ENCODE measurements at regions of chr18 and their contacts with region 1.

Region 1: DNA sequence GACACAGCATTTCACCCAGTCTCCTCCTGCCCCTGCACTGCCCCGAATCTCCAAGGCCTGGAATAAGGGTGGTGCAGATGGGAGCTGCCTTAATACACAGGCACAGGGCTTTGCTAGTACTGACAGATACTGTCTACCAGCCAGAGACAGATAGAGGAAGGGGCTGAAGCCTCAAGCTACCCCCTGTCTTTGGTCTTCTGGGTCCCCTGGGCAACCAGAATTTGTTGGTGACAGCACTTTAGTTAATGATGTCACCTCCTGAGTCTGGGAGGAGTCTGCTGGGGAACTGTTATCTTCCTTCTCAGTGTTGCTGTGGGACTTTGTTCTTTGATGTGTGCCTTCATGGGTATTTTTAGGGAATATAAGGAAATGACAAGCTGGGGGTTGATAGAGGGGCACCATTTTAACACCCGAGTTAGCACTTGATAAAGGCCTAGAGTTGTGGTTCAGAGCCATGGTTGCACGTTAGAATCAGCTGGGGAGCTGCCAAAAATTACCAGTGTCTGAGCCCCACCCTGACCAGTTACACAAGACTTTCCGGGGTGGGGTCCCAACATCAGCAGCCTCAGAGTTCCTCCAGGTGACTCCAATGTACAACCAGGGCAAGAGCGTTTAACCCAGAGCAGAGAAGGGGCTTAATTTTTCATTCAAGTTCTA is 136.8 kb downstream of the SMAD7 start:
- DNase-seq: peak; percentile 37
- H3K4me3 Mint-ChIP-seq: no peak overlapping the region
- H3K27ac Mint-ChIP-seq: peak overlapping the region; percentile 80
- H3K4me1 Mint-ChIP-seq: peaks cover 49% of the 10 kb centered on the region
- H3K27me3 Mint-ChIP-seq: no peaks in the 10 kb centered on the region

Region 2: GRCh38 chr18:48675352-48675761 is 138.6 kb before region 1 on chr18:
- CTCF ChIA-PET with region 1: no interaction called
- POLR2A ChIA-PET with region 1: no interaction called
- intact Hi-C with region 1: no loop called
- DNase-seq: peak; percentile 87
- H3K4me3 Mint-ChIP-seq: no peak overlapping the region
- H3K27ac Mint-ChIP-seq: no peak overlapping the region
- H3K4me1 Mint-ChIP-seq: peaks cover 2% of the 10 kb centered on the region
- H3K27me3 Mint-ChIP-seq: no peaks in the 10 kb centered on the region

Region 3: GRCh38 chr18:48800876-48801727 is 12.9 kb before region 1 on chr18:
- CTCF ChIA-PET with region 1: interaction called, 4 read pairs
- POLR2A ChIA-PET with region 1: interaction called, 8 read pairs
- intact Hi-C with region 1: loop called (anchors 1 kb)
- DNase-seq: peak; percentile 40
- H3K4me3 Mint-ChIP-seq: no peak overlapping the region
- H3K27ac Mint-ChIP-seq: peak overlapping the region; percentile 61
- H3K4me1 Mint-ChIP-seq: peaks cover 51% of the 10 kb centered on the region
- H3K27me3 Mint-ChIP-seq: no peaks in the 10 kb centered on the region